Caki2 (cell line): ENCODE measurements at regions of chr12 and their contacts with region 1.

Region 1: DNA sequence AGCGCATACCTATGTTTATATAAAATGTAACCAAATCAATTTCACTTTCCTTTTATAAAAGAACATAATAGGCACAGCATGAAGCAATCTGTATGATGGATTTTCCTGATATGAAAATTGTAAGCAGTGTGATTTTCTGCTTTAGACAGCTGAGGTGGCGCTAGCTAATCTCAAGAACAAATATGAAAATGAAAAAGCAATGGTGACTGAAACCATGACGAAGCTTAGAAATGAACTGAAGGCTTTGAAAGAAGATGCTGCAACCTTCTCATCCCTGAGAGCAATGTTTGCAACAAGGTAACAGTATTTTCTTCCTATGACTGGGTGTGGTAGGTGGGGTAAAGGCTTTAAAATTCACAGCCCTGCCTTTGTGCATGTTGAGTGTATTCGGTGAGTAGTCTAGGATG is 65.0 kb upstream of the FGD4 start:
- DNase-seq: no peak

Region 2: DNA sequence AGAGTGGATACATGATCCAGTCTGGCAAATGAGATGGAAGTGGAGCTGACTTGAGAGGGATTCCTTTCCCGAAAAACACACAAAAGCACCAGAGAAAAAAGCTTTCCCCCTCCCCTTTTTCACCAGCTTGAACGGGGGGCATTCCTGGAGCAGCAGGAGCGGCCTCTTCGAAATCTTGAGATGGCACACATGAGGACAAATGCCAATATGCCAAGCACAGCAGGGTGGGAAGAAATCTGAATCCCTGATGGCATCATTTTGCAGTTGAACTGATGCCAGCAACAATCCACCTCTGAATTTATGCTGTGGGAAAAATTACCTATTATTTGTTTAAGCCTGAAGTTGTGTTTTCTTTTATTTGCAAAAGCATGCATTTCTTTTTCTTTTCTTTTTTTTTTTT is 257.4 kb before region 1 on chr12:
- in situ Hi-C with region 1: loop called (anchors 10 kb)
- DNase-seq: no peak